ENCODE measurements at regions of chr2 and their contacts with region 1.

Region 1: DNA sequence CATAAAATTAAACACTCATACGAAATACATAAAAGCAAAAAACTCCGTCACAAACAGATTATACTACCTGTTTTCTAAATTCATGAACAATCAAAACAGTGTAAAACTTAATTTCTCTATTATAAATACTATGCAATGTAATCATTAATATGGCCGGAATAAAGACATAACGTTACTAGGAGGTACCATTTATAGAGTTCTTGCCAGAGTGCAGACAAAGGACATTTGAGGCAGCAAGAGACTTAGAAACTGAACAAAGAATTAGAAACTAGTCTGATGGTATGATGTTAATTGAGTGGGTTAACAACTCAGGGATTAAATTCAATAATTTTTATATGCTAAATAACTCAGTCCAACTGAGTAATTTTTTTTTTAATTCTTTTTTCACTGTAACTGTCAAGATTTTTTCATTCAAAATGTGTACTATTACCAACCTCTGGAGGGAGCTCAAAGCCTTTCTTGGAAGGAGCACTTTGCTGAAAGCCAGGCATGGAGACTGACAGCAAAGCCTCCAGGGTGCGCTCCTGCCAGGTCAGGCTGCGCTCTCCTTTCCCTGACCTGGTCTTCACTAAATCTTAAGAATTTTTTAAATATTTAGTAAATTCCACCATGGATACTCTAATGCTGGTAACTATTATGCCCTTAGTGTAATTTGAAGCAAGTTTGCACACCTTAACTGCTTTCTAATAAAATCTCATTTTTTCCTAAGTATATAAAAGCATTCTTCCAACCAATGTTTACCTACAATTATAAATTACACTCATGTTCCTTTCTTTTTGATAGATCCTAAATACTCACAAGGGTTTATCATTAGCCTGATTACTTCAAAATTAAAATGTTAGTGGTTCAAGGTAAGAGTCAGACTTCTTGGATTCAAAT is 34.1 kb downstream of the WDR35 start:
- DNase-seq: peak; percentile 57 to 84 (median 65)
- ATAC-seq: peak; percentile 100
- H3K4me3 ChIP-seq: no peak overlapping the region
- H3K27ac ChIP-seq: no peak overlapping the region
- H3K4me1 ChIP-seq: no peaks in the 10 kb centered on the region
- H3K27me3 ChIP-seq: no peaks in the 10 kb centered on the region
- CTCF ChIP-seq: peak; percentile 92 to 100 (median 99)
- EP300 ChIP-seq: no peak
- POLR2A ChIP-seq: no peak
- RAD21 ChIP-seq: peak; percentile 97 to 98

Region 2: DNA sequence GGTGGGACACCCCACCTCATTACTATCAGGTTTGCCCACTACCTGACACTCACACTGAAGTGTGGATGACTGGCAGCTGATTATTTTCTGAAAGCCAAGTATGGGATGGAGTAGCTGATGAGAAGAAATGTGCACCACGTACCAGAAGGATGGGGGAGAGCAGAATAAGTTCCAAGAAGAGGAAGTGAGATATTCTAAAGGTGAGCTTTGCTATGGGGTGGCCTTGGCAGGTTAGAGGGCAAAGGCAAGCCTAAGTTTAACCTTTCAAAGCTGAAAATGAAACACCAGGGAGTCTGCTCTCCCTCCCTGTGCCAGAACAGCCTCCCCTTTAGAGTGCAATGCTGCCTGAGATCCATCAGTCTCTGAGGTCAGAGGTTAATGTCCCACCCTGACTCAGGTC is 401.3 kb before region 1 on chr2:
- CTCF ChIA-PET with region 1: no interaction called
- POLR2A ChIA-PET with region 1: no interaction called
- in situ Hi-C with region 1: no loop called
- intact Hi-C with region 1: no loop called
- DNase-seq: no peak
- ATAC-seq: no peak
- H3K4me3 ChIP-seq: no peak overlapping the region
- H3K27ac ChIP-seq: no peak overlapping the region
- H3K4me1 ChIP-seq: no peaks in the 10 kb centered on the region
- H3K27me3 ChIP-seq: no peaks in the 10 kb centered on the region
- CTCF ChIP-seq: no peak
- EP300 ChIP-seq: no peak
- POLR2A ChIP-seq: no peak
- RAD21 ChIP-seq: no peak

Region 3: DNA sequence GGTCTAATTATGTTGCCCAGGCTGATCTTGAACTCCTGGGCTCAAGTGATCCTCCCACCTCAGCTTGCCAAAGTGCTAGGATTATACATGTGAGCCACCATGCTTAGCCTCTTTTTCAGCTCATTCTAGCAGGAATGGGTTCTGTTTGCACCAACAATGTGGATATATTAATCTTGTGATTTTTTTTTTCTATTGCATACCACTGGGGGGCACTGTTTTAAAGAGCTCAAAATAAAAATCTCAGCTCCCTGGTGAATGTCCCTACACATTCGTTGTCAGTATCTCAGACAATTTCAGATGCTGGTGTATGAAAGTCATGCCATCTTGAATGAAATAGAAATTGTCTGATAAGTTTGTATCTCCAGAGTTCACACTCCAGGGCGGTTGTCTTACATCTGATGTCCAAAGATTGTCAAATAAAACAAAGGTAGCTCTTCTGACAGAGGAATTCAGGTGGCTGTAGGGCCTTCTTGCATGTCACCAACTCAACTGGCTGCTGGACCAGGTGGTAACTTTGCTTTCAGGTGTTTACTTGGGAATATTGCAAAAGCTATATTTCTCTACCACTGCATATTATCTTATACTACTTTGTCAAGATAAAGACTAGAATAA is 59.8 kb after region 1 on chr2:
- CTCF ChIA-PET with region 1: no interaction called
- POLR2A ChIA-PET with region 1: interaction called, 3 read pairs
- in situ Hi-C with region 1: no loop called
- intact Hi-C with region 1: loop called (anchors 5 kb)
- DNase-seq: peak; percentile 38 to 55 (median 44)
- ATAC-seq: peak; percentile 61
- H3K4me3 ChIP-seq: no peak overlapping the region
- H3K27ac ChIP-seq: no peak overlapping the region
- H3K4me1 ChIP-seq: peaks cover 0 to 11% of the 10 kb centered on the region in 2 experiments; a peak in 2 of 5 replicates
- H3K27me3 ChIP-seq: peaks cover 16 to 27% of the 10 kb centered on the region in 2 experiments
- CTCF ChIP-seq: peak; percentile 39 to 78 (median 52); a peak in 4 of 6 replicates
- EP300 ChIP-seq: no peak
- POLR2A ChIP-seq: no peak
- RAD21 ChIP-seq: peak; percentile 66 to 76

Region 4: GRCh38 chr2:20225294-20226151 is 269.7 kb after region 1 on chr2:
- CTCF ChIA-PET with region 1: interaction called, 15 read pairs
- POLR2A ChIA-PET with region 1: interaction called, 3 read pairs
- in situ Hi-C with region 1: no loop called
- intact Hi-C with region 1: loop called (anchors 5 kb)
- DNase-seq: peak; percentile 67 to 78 (median 76)
- ATAC-seq: peak; percentile 91
- H3K4me3 ChIP-seq: peak overlapping the region; percentile 47
- H3K27ac ChIP-seq: no peak overlapping the region
- H3K4me1 ChIP-seq: peaks cover 0 to 29% of the 10 kb centered on the region in 2 experiments; a peak in 2 of 5 replicates
- H3K27me3 ChIP-seq: peaks cover 15 to 59% of the 10 kb centered on the region in 2 experiments; a peak in 3 of 5 replicates
- CTCF ChIP-seq: peak; percentile 57 to 72 (median 66)
- EP300 ChIP-seq: no peak
- POLR2A ChIP-seq: no peak
- RAD21 ChIP-seq: peak; percentile 85 to 86

Region 5: DNA sequence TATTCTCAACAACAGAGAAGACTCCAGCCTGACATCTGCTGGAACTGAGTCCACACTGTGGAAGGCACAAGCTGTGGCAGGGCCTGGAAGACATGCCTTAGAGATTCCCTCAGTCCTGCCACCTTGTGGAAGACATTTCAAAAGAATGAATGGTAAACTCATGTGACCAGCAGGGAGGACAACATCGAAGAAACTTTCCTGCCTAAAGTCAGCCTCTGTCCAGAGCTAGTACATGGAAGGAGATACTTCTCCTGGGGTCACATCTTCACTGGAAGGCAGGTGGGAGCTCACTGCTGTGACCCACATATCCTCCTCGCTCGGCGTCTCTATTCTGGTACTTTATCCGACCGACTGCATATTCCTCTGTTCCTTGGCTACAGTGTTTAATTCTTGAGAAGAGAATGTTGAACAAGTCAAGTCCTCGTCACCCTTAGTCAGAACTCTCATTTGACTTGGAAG is 335.4 kb after region 1 on chr2:
- CTCF ChIA-PET with region 1: interaction called, 5 read pairs
- POLR2A ChIA-PET with region 1: no interaction called
- in situ Hi-C with region 1: no loop called
- intact Hi-C with region 1: loop called (anchors 2 kb)
- DNase-seq: peak; percentile 60 to 83 (median 70)
- ATAC-seq: peak; percentile 100
- H3K4me3 ChIP-seq: no peak overlapping the region
- H3K27ac ChIP-seq: peak overlapping the region; percentile 39; the same call in 2 of the 3 replicates
- H3K4me1 ChIP-seq: peaks cover 4 to 7% of the 10 kb centered on the region in 2 experiments; a peak in 3 of 5 replicates
- H3K27me3 ChIP-seq: no peaks in the 10 kb centered on the region
- CTCF ChIP-seq: peak; percentile 76 to 98 (median 90)
- EP300 ChIP-seq: no peak
- POLR2A ChIP-seq: no peak
- RAD21 ChIP-seq: peak; percentile 34 to 53